Activated CD8-positive, alpha-beta T cell treated with anti-CD3 and anti-CD28 coated beads, Interleukin-2, amount 10 ng/mL, durations not matched to agents 7 days and 5 days (primary cell): ENCODE measurements at regions of chr18 and their contacts with region 1.

Region 1: DNA sequence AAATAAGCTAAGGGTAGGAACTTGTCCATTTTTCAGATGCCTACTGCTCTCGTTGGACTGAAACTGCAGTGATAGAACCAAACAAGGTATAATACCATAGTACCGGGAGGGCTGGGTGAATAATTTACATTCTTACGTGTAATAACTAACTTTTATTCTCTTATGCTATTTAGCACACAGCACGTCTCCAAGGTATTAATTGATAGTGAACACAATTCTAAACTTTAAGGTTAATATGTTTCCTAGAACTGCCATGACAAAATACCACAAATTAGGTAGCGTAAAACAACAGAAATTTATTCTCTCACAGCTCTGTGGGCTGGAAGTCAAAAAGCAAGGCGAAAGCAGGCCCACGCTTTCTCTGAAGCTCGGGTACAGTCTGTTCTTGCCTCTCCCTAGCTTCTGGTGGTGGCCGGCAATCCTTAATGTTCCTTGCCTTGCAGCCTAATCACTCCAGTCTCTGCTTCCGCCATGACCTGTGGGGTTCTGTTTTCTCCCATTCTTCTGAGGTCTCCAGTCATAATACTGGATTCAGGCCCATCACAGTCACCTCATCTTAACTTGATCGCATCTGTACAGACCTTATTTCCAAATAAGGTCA is 5.6 kb upstream of the BCL2 start:
- DNase-seq: no peak
- ATAC-seq: no peak
- H3K4me3 Mint-ChIP-seq: no peak overlapping the region
- H3K27ac Mint-ChIP-seq: no peak overlapping the region
- H3K4me1 Mint-ChIP-seq: peaks cover 23% of the 10 kb centered on the region
- H3K27me3 Mint-ChIP-seq: no peaks in the 10 kb centered on the region

Region 2: DNA sequence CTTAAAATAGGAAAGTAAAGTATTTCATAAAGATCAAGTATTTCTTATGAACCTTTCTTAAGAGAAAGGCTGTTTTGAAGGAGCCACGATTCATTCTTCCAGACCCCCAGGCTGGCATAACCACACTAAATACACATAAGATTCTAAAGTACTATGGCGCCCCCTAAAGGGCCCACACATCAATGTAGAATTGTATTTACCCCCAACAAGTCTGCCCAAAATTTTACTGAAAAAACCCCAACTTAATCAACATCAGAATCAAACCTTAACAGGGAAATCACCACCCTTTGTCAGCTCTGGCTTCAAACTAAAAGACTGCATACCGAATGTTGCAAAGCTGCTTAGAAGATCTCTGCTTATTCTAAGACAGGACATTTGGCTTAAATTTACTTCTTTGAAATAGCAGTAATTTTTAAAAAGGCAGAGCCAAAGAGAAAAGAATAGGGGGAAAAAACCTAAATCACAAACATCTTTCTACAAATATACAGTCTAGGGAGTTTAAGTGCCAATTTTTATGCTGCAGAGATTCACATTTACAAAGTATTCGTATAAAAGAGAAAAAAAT is 14.8 kb after region 1 on chr18:
- CTCF ChIA-PET with region 1: interaction called, 26 read pairs
- POLR2A ChIA-PET with region 1: interaction called, 3 read pairs
- DNase-seq: peak; percentile 71
- ATAC-seq: peak; percentile 64
- H3K4me3 Mint-ChIP-seq: no peak overlapping the region
- H3K27ac Mint-ChIP-seq: no peak overlapping the region
- H3K4me1 Mint-ChIP-seq: peaks cover 3% of the 10 kb centered on the region
- H3K27me3 Mint-ChIP-seq: no peaks in the 10 kb centered on the region

Region 3: GRCh38 chr18:63487676-63488075 is 162.5 kb after region 1 on chr18:
- CTCF ChIA-PET with region 1: no interaction called
- POLR2A ChIA-PET with region 1: no interaction called
- DNase-seq: no peak
- ATAC-seq: no peak
- H3K4me3 Mint-ChIP-seq: no peak overlapping the region
- H3K27ac Mint-ChIP-seq: no peak overlapping the region
- H3K4me1 Mint-ChIP-seq: no peaks in the 10 kb centered on the region
- H3K27me3 Mint-ChIP-seq: peaks cover 23% of the 10 kb centered on the region